Activated T-helper 1 cell treated with anti-CD3 and anti-CD28 coated beads, Interleukin-12 subunit alpha, Interleukin-12 subunit beta, Interleukin-2, Interleukin-4 antibody, amounts not matched to agents 30 ng/mL and 10 ng/mL and 1 ng/mL, durations not matched to agents 14 hours and 24 hours and 36 hours (primary cell): ENCODE measurements at regions of chr14 and their contacts with region 1.

Region 1: DNA sequence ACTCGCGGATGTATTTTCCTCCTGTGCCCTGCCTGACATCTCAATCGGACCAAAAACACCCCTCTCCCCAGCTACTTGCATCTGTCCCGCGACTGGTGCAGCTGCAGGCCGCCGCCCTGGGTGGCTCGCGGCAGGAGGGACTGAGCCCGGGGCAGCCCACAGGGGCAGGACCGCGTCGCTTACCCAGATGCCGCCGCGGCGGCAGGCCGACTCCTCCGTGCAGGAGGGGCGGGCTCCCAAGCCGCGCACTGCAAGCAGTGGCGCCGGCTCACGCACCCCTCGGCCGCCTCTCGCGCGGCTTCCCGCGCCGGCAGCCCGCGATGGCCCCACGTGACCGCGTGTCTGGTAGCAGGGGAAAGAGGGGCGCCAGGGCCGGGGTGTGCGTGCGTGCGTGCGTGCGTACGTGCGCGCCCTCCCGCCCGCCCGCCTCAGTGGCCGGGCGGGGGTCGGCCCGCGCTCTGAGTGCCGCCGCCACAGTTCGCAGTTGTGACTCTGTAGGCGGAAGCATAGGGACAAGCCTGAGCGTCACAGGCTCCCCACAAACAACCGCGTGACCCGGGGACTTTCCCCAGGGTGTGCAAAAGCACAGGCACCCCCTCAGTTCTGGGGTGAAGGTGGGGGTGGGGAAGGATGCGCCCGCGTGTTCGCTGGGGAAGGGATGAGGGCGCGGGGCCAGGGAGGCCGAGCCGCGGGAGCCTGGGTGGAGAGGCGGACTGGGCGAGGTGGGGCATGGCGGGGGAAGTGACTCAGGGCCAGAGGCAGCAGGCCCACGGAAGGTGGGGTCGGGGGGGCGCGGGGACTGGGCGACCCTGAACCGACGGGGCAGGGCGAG is at the start of gene ZBTB25:
- DNase-seq: peak; percentile 96
- H3K4me3 Mint-ChIP-seq: peak within 1 kb of the TSS; percentile 96
- H3K27ac Mint-ChIP-seq: peak within 1 kb of the TSS; percentile 100
- H3K4me1 Mint-ChIP-seq: peaks cover 68% of the 10 kb centered on the region
- H3K27me3 Mint-ChIP-seq: peaks cover 2% of the 10 kb centered on the region
- total RNA-seq, gene ZBTB25: 18.6 and 19.6 TPM in 2 replicates

Region 2: DNA sequence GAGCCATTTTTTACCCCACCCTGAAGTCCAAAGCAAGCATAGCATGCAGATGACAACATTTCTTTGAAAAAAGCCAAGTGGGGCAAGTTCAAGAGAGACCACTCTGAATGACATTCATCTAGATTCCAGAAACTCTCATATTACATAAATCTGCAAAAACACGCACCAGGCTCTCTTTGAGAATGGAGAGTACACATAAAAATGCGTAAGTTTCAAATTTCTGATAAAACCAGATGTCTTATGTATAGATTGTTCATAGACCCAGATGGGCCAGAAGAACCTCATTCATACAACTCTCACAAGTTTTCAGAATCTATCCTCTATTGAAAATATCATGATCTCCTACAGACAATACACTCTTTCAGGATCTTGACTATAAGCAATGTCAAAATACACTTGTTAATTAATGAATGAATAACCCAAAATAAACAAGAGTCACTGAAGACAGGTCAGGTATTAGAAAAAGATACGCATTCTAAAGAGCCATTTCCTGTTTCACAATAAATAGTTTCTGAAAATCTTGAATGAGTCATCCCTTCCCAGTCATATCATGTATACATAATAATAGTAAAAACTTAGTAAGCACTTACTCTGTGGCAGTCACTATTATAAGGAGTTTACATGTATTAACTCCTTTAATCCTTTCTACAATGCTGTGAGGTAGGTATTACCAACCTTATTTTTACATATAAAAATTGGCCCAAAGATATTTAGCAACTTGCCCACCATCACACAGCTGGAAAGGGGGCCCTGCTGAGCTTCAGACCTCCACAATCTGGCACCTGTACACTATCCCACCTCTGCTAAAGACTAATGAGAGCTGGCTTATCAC is 1032.5 kb before region 1 on chr14:
- intact Hi-C with region 1: loop called (anchors 10 kb)
- DNase-seq: no peak
- H3K4me3 Mint-ChIP-seq: peak overlapping the region; percentile 46
- H3K27ac Mint-ChIP-seq: peak overlapping the region; percentile 40
- H3K4me1 Mint-ChIP-seq: peaks cover 46% of the 10 kb centered on the region
- H3K27me3 Mint-ChIP-seq: no peaks in the 10 kb centered on the region

Region 3: DNA sequence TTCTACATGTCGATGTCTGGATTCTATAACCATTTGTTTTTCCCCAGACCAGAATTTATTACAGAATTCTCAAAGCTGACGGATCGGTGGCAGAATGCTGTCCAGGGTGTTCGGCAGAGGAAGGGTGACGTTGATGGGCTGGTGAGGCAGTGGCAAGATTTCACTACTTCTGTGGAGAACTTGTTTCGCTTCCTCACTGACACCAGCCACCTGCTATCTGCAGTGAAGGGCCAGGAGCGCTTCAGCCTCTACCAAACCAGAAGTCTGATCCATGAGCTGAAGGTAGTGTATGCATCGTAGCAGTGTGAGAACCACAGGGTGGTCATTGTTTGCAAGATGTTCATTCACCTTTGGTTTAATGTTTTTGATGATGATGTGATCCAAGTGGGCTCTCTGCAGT is 333.5 kb before region 1 on chr14:
- intact Hi-C with region 1: loop called (anchors 10 kb)
- DNase-seq: no peak
- H3K4me3 Mint-ChIP-seq: no peak overlapping the region
- H3K27ac Mint-ChIP-seq: no peak overlapping the region
- H3K4me1 Mint-ChIP-seq: peaks cover 4% of the 10 kb centered on the region
- H3K27me3 Mint-ChIP-seq: no peaks in the 10 kb centered on the region

Region 4: DNA sequence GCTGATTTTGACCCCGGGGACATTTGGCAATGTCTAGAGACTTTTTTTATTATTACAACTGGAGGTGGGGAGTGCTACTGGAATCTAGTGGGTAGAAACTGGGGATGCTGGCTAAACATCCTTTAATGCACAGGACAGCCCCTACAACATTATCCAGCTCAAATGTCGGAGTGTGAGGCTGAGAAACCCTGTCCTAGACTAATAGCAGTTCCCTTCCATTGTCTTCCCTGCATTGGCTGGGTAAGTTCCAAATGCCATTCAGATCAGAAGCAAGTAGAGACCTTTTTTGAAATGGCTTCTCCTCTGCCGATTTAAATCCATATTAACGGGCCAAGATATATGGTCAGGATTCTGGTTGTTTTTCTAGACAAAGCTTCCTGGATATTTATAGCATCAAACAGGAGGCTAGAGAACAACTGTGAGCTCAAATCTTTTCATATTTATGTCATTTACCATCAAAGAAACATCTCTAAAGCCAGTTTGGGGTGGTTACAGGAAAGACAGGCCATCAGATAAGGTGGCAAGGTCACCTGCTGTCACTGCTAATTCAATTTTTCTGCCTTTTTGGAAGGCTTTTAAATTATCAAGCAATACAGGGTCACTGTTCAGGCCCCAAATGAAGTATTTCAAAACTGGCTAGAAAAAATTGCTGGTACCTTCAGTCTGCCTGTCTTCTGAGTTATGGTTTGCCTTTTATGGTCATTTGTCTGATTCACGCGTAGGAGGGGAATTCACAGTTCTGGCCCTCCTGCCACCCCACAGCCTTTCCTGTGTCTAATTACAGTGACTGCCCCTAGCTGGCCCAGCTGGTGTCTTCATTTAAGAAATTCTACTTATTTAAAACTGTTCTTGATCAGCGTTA is 58.5 kb before region 1 on chr14:
- intact Hi-C with region 1: loop called (anchors 2 kb)
- DNase-seq: peak; percentile 43
- H3K4me3 Mint-ChIP-seq: peak overlapping the region; percentile 68
- H3K27ac Mint-ChIP-seq: peak overlapping the region; percentile 87
- H3K4me1 Mint-ChIP-seq: peaks cover 28% of the 10 kb centered on the region
- H3K27me3 Mint-ChIP-seq: no peaks in the 10 kb centered on the region

Region 5: GRCh38 chr14:64540208-64541157 is 36.8 kb after region 1 on chr14 and contains the start of gene HSPA2:
- intact Hi-C with region 1: loop called (anchors 1 kb)
- DNase-seq: peak; percentile 94
- H3K4me3 Mint-ChIP-seq: peak within 1 kb of the TSS; percentile 91
- H3K27ac Mint-ChIP-seq: peak within 1 kb of the TSS; percentile 92
- H3K4me1 Mint-ChIP-seq: peaks cover 42% of the 10 kb centered on the region
- H3K27me3 Mint-ChIP-seq: peaks cover 56% of the 10 kb centered on the region
- total RNA-seq, gene HSPA2: 11.2 and 11.6 TPM in 2 replicates

Region 6: DNA sequence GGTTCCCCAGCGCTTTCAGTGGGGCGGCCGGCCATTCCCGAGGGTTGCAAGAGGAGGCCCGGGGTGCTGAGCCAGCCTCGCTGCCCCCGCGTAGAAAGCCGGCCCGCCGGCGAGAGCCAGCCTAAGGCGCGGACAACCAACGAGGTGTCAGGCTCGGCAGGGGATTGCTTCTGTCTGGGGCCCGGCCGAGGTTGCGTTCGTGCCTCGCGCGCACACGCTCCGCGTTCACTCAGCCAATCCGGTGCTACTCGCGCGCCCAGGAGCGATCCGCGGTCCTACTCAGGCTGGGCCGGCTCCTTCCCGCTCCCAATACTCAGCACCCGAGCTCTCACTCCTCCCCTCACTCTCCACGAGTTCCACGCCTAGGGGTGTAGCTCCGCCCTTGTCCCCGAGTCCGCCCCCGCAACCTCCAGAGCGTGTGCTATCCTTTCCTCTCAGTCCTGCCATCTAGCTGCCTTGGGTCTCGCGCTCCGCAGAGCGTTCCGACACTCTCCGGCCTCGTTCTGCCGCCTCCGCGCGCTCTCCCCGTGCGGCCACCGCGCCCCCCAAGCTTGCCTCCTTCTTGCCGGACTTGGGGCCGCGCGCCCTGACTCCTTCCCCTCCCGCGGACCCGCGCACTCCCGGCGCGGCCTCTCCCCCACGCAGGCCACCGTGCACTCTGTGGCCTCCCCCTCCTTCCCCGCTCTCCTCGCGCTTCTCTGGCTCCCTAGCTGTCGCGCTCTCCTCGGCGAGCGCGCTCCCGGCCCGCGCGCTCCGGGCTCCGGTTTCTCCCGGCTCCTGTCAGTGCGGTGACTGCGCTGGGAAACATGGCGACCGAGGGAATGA is 2004.2 kb after region 1 on chr14 and contains the start of gene GPHN:
- intact Hi-C with region 1: loop called (anchors 5 kb)
- DNase-seq: peak; percentile 90
- H3K4me3 Mint-ChIP-seq: peak within 1 kb of the TSS; percentile 93
- H3K27ac Mint-ChIP-seq: peak within 1 kb of the TSS; percentile 96
- H3K4me1 Mint-ChIP-seq: peaks cover 36% of the 10 kb centered on the region
- H3K27me3 Mint-ChIP-seq: peaks cover 22% of the 10 kb centered on the region
- total RNA-seq, gene GPHN: 38.5 and 43.5 TPM in 2 replicates